PC-9 (cell line): ENCODE measurements at regions of chr5 and their contacts with region 1.

Region 1: DNA sequence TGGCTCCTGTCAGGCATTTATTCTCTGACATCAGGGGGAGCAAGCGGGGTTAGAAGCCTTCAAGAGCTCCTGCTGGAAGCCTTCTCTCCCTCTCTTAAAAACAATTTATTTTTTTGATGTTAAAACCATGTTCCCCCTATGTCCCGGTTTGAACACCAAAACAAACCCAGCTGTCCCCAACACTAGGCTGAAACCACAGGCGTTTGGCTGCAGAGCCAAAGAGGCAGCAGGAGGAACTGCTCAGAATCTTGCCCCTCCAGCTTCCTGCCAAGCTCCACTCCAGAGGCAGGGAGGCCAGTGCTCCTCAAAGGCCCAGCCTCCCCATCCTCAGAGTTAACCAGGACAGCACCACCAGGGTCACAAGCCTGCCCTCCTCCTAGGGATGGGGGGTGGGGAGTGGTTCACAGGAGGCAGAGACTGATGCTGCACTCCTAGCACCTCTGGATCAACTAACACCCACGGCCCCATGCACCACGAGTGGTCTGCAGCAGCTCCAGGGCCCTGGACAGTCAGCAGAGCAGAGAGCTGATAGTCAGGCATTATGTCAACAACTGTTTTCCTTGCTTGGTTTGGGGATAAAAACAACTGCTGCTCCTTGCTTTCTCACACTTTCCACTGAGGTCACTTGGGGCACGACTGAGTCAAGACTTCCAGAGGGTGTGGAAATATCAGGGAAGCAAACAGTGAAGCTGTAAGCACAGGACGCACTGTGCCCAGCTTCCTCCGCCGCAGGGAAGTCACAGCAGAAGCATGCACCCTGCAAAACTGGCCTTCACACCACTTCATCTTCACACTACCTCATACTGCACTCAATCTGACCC is 96.5 kb upstream of the ADRA1B start:
- DNase-seq: peak; percentile 38 to 95
- H3K4me3 ChIP-seq: no peak overlapping the region
- H3K27ac ChIP-seq: peak overlapping the region; percentile 94
- H3K4me1 ChIP-seq: peaks cover 95% of the 10 kb centered on the region
- H3K27me3 ChIP-seq: no peaks in the 10 kb centered on the region
- CTCF ChIP-seq: no peak

Region 2: GRCh38 chr5:159773062-159773924 is 46.5 kb before region 1 on chr5:
- CTCF ChIA-PET with region 1: interaction called, 4 read pairs
- POLR2A ChIA-PET with region 1: interaction called, 10 read pairs
- intact Hi-C with region 1: no loop called
- DNase-seq: peak; percentile 71 to 83
- H3K4me3 ChIP-seq: peak overlapping the region; percentile 61
- H3K27ac ChIP-seq: peak overlapping the region; percentile 66
- H3K4me1 ChIP-seq: peaks cover 33% of the 10 kb centered on the region
- H3K27me3 ChIP-seq: no peaks in the 10 kb centered on the region
- CTCF ChIP-seq: peak; percentile 38; the same call in 1 of the 2 replicates